Ovary (tissue), 10 donors: ENCODE measurements at regions of chr12 and their contacts with region 1.

Region 1: DNA sequence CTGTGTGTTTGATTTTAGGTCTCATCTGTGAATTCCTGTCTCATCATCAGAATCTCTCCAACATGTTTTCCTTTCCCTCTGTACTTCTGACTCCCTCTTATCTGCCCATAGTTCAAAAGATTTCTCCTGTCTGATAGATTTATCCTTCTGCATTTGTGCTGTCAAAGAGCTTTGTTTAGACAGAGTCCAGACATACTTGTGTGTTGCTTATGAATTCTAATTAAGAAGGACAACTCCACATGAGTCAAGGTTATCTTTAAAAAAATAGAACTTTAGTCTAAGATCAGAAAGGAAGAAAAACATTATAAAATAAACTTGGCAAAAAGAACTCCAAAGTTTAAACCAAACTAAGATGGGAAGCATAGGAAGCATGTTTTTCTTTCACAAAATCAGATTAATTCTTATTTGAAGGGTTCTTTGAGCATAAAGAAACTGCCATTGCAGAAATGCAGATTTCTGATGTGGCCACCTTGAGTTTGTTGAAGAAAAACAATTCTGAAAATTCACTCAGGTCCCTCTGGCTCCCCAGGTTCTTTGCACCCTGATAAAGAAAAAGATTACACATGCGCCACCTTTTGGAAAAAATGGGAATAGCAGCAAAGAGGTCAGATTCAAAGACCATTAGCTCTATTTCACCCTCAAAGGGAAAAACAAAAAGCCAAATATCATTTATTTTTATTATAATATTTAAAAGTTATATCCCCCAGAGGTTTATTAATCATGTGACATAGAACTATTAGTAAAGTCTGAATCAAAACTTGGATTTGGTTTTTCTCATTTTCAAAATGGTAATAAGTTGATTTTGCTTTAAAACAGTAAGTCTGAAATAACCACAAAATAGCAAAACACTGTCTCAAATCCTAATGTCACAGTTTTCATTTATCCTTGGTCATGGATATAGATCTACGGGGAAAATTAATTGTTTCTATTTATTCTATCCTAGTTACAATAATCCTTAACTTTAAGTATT is 143.7 kb upstream of the DCN start:
- DNase-seq: peak in 4 of 5 donors; percentile 27 to 72 (median 52)
- H3K4me3 ChIP-seq: no peak overlapping the region
- H3K27ac ChIP-seq: peak overlapping the region in 1 of 2 donors; percentile 54
- H3K4me1 ChIP-seq: peaks cover 2% of the 10 kb centered on the region
- H3K27me3 ChIP-seq: no peaks in the 10 kb centered on the region
- CTCF ChIP-seq: peak; percentile 41 to 86 (median 78)
- EP300 ChIP-seq: no peak
- POLR2A ChIP-seq: no peak

Region 2: DNA sequence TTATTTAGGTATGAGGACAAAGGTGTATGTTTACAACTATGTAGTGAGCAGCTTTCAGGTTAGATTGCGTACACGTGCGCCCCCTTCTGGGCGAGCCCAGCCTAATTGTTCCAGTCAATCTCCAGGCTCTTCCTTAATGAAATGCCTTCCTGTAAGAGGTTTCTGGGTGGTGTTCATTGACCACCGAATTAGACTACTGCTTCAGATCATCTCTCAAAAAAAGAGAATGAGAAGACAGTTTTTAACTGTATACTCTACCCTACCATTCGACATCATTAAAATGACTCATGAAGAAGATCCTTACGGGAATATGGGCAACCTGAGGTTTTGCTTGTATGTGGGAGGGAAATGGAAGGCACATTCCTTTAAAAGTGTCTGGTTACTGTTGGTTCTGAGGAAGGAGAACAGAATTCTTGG is 217.2 kb before region 1 on chr12:
- intact Hi-C with region 1: loop called in 1 of 4 experiments (anchors 10 kb)
- DNase-seq: peak; percentile 50 to 85 (median 66)
- H3K4me3 ChIP-seq: peak overlapping the region; percentile 32
- H3K27ac ChIP-seq: peak overlapping the region in 1 of 2 donors; percentile 5
- H3K4me1 ChIP-seq: peaks cover 2% of the 10 kb centered on the region
- H3K27me3 ChIP-seq: no peaks in the 10 kb centered on the region
- CTCF ChIP-seq: peak in 2 of 3 donors; percentile 38 to 71
- EP300 ChIP-seq: no peak
- POLR2A ChIP-seq: no peak

Region 3: DNA sequence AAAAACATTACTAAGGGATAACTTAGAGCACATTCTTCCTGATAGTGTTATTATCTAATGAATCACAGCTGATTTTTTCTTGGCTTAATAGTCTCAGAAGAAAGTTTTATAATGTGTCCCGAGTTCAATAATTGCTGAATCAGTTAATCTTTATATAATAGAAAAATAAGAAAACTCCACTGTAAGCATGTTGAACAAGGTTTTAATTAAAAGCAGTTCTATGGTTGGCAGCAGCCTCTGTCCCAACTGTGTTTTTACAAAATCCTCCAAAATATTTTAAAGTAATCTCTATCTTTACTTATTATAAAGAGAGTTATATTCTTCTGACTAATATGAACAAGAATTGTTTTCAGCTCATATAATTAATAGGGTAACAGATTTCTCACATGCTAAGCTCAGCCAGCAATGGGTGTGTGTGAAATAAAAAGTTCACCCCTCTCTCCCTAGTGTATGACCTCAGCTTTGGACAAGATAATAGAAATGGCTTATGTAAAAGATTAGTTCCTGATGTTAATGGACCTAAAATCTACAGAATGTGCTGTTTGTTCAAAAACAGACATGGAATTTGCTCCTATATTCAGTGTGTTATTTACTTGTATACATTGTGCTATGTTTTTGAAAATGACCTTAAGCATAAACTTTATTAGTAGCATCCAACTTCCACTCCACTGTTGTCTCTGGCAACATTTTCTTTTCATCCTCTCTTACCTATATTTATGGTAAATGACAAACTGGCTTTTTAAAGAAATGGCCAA is 76.6 kb before region 1 on chr12:
- intact Hi-C with region 1: loop called in 1 of 4 experiments (anchors 10 kb)
- DNase-seq: no peak
- H3K4me3 ChIP-seq: no peak overlapping the region
- H3K27ac ChIP-seq: peak overlapping the region; percentile 1 to 75
- H3K4me1 ChIP-seq: no peaks in the 10 kb centered on the region
- H3K27me3 ChIP-seq: no peaks in the 10 kb centered on the region
- CTCF ChIP-seq: no peak
- EP300 ChIP-seq: no peak
- POLR2A ChIP-seq: no peak

Region 4: GRCh38 chr12:91274916-91275315 is 51.4 kb before region 1 on chr12:
- intact Hi-C with region 1: no loop called
- DNase-seq: peak in 3 of 5 donors; percentile 43 to 52 (median 49)
- H3K4me3 ChIP-seq: no peak overlapping the region
- H3K27ac ChIP-seq: peak overlapping the region in 1 of 2 donors; percentile 69
- H3K4me1 ChIP-seq: peaks cover 7% of the 10 kb centered on the region
- H3K27me3 ChIP-seq: no peaks in the 10 kb centered on the region
- CTCF ChIP-seq: no peak
- EP300 ChIP-seq: no peak
- POLR2A ChIP-seq: no peak